ENCODE measurements at regions of chr20 and their contacts with region 1.

Region 1: GRCh38 chr20:55947701-55948100 is 57.6 kb downstream of the CBLN4 start:
- DNase-seq: no peak
- H3K4me3 ChIP-seq: no peak overlapping the region
- H3K4me3 Mint-ChIP-seq: no peak overlapping the region
- H3K27ac ChIP-seq: no peak overlapping the region
- H3K27ac Mint-ChIP-seq: no peak overlapping the region
- H3K4me1 ChIP-seq: no peaks in the 10 kb centered on the region
- H3K4me1 Mint-ChIP-seq: no peaks in the 10 kb centered on the region
- H3K27me3 ChIP-seq: no peaks in the 10 kb centered on the region
- H3K27me3 Mint-ChIP-seq: peaks cover 0 to 4% (median 0%) of the 10 kb centered on the region in 3 donors
- CTCF ChIP-seq: no peak

Region 2: DNA sequence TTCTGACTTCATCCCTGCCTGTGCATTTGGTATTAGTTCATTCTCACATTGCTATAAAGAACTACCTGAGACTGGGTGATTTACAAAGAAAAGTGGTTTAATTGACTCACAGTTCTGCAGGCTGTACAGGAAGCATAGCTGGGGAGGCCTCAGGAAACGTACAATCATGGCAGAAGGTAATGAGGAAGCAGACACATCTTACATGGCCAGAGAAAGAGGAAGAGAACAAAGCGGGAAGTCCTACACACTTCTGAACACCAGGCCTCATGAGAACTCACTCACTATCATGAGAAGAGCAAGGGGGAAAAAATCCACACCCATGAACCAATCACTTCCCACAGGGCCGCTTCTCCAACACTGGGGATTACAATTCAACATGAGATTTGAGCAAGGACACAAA is 246.2 kb before region 1 on chr20:
- intact Hi-C with region 1: no loop called
- DNase-seq: no peak
- H3K4me3 ChIP-seq: no peak overlapping the region
- H3K4me3 Mint-ChIP-seq: no peak overlapping the region
- H3K27ac ChIP-seq: no peak overlapping the region
- H3K27ac Mint-ChIP-seq: no peak overlapping the region
- H3K4me1 ChIP-seq: no peaks in the 10 kb centered on the region
- H3K4me1 Mint-ChIP-seq: no peaks in the 10 kb centered on the region
- H3K27me3 ChIP-seq: no peaks in the 10 kb centered on the region
- H3K27me3 Mint-ChIP-seq: no peaks in the 10 kb centered on the region
- CTCF ChIP-seq: no peak

Region 3: GRCh38 chr20:56004007-56004406 is 56.3 kb after region 1 on chr20:
- intact Hi-C with region 1: loop called in 1 of 2 experiments (anchors 10 kb)
- DNase-seq: no peak
- H3K4me3 ChIP-seq: no peak overlapping the region
- H3K4me3 Mint-ChIP-seq: peak overlapping the region in 1 of 2 donors; percentile 80
- H3K27ac ChIP-seq: no peak overlapping the region
- H3K27ac Mint-ChIP-seq: no peak overlapping the region
- H3K4me1 ChIP-seq: no peaks in the 10 kb centered on the region
- H3K4me1 Mint-ChIP-seq: no peaks in the 10 kb centered on the region
- H3K27me3 ChIP-seq: peaks cover 11 to 49% of the 10 kb centered on the region in 2 donors
- H3K27me3 Mint-ChIP-seq: peaks cover 30 to 48% (median 41%) of the 10 kb centered on the region in 3 donors
- CTCF ChIP-seq: no peak

Region 4: GRCh38 chr20:56200456-56200855 is 252.8 kb after region 1 on chr20:
- intact Hi-C with region 1: no loop called
- DNase-seq: no peak
- H3K4me3 ChIP-seq: no peak overlapping the region
- H3K4me3 Mint-ChIP-seq: no peak overlapping the region
- H3K27ac ChIP-seq: no peak overlapping the region
- H3K27ac Mint-ChIP-seq: no peak overlapping the region
- H3K4me1 ChIP-seq: no peaks in the 10 kb centered on the region
- H3K4me1 Mint-ChIP-seq: no peaks in the 10 kb centered on the region
- H3K27me3 ChIP-seq: no peaks in the 10 kb centered on the region
- H3K27me3 Mint-ChIP-seq: no peaks in the 10 kb centered on the region
- CTCF ChIP-seq: no peak

Measured in CD14-positive monocyte (primary cell).